ENCODE measurements at regions of chr9 and their contacts with region 1.

Region 1: DNA sequence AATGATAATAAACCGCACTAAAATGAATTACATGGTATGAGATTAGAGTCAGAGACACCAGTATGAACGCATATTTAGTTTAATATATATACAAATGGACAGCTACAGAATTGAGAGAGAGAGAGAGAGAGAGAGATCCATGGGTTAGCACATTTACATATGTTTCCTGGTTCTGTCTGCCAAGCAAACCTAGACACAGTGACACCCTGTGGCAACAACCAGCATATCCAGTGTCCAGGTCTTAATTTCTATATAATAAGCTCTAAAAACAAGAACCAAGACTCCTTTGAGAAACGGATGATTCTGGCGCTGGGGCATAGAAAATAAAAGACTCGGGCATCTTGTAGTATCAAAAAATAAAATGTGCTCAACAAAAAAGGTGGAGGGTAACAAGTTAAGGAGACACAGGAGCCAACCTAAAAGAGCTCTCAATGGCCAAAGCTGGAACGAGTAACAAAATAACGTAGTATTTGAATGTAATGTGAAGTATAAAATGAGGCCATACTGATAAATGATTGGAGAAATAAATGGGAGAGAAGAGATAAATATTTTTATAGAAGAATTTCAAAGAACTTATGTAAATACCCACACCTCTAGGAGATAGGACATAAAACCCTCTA is 84.5 kb downstream of the RFX3 start:
- DNase-seq: peak; percentile 76 to 88 (median 87)
- H3K4me3 ChIP-seq: no peak overlapping the region
- H3K27ac ChIP-seq: no peak overlapping the region
- H3K4me1 ChIP-seq: no peaks in the 10 kb centered on the region
- H3K27me3 ChIP-seq: no peaks in the 10 kb centered on the region

Region 2: GRCh38 chr9:3240656-3241268 is 200.5 kb before region 1 on chr9:
- CTCF ChIA-PET with region 1: interaction called, 27 read pairs
- POLR2A ChIA-PET with region 1: no interaction called
- DNase-seq: peak; percentile 64 to 75 (median 71)
- H3K4me3 ChIP-seq: no peak overlapping the region
- H3K27ac ChIP-seq: no peak overlapping the region
- H3K4me1 ChIP-seq: no peaks in the 10 kb centered on the region
- H3K27me3 ChIP-seq: no peaks in the 10 kb centered on the region

Region 3: GRCh38 chr9:3331817-3332216 is 109.5 kb before region 1 on chr9:
- CTCF ChIA-PET with region 1: interaction called, 13 read pairs
- POLR2A ChIA-PET with region 1: no interaction called
- DNase-seq: peak in 2 of 3 donors; percentile 10 to 11
- H3K4me3 ChIP-seq: no peak overlapping the region
- H3K27ac ChIP-seq: no peak overlapping the region
- H3K4me1 ChIP-seq: no peaks in the 10 kb centered on the region
- H3K27me3 ChIP-seq: no peaks in the 10 kb centered on the region

Region 4: DNA sequence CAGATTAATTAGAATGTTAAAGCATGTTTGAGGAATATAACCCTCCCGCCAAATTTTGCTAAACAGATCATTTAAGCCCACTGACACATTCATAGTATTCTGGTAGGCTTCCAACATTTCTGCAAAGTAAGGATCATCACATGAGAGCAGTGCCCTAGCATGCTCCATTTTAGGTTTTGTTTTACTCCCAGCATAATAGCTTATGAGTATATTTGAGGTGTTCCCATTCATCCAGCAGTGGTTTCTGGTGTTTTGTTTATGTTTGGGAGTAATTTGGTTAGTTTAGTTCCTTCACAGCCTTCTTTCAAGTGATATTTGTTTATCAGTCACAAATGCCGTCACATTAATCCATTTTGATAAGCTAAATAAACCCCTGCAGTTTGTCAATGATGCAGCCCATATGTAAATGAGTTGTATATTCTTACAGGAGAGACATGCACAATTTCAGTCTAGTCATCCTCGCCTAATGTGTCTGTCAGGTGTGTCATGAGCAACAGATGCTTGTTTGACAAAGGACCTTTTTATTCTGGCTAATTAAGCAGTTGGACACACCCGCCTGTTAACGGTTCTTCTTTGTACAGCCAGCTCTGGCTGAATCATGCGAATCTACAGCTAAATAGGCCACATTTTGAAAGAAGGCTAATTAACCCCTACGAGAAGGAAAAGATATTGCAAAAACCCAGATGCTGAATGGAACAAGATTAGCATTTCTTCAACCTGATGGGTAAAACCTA is 39.9 kb before region 1 on chr9:
- CTCF ChIA-PET with region 1: interaction called, 11 read pairs
- POLR2A ChIA-PET with region 1: no interaction called
- DNase-seq: peak in 2 of 3 donors; percentile 33 to 51
- H3K4me3 ChIP-seq: no peak overlapping the region
- H3K27ac ChIP-seq: no peak overlapping the region
- H3K4me1 ChIP-seq: peaks cover 8 to 25% (median 18%) of the 10 kb centered on the region in 4 experiments
- H3K27me3 ChIP-seq: no peaks in the 10 kb centered on the region

Region 5: GRCh38 chr9:3464033-3464638 is 22.8 kb after region 1 on chr9:
- CTCF ChIA-PET with region 1: no interaction called
- POLR2A ChIA-PET with region 1: no interaction called
- DNase-seq: no peak
- H3K4me3 ChIP-seq: no peak overlapping the region
- H3K27ac ChIP-seq: no peak overlapping the region
- H3K4me1 ChIP-seq: no peaks in the 10 kb centered on the region
- H3K27me3 ChIP-seq: no peaks in the 10 kb centered on the region